Head of caudate nucleus (tissue), 42 donors: ENCODE measurements at regions of chr6 and their contacts with region 1.

Region 1: GRCh38 chr6:134882426-134883038 is 67.4 kb downstream of the ALDH8A1 start:
- DNase-seq: peak; percentile 8 to 90 (median 75)

Region 2: DNA sequence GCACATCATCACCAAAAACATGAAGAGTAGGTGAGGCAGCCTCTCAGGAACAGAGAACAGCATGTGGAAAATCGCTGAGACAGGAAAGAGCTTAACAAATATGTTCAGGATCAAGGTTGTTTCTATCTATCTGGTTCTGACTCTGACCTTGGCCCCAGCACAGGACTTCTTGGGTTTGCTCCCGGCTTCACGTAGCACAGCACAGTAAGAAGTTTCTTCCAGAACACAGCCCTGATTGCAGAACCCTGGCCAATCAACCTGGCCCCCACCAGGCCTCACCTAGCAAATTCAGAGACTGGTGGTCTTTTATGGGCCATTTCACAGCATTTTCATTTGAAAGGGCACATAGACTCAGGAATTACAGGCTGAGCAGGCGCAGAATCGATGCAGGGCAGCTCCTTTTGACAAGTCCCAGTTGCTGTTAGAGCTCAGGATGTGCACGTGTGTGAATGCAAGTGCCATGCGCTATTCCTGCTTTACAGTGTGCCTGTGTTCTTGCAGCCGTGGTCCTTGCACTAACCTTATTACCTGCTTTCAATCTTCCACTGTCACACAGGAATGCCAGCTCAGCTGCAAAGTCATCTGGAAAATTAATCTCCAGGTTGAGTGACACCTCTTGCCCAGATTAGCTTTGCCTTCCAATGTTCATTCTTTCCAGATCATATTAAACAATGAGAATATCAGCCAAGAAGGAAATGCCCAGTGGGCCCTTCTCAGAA is 729.6 kb before region 1 on chr6:
- intact Hi-C with region 1: loop called (anchors 10 kb)
- DNase-seq: no peak

Region 3: DNA sequence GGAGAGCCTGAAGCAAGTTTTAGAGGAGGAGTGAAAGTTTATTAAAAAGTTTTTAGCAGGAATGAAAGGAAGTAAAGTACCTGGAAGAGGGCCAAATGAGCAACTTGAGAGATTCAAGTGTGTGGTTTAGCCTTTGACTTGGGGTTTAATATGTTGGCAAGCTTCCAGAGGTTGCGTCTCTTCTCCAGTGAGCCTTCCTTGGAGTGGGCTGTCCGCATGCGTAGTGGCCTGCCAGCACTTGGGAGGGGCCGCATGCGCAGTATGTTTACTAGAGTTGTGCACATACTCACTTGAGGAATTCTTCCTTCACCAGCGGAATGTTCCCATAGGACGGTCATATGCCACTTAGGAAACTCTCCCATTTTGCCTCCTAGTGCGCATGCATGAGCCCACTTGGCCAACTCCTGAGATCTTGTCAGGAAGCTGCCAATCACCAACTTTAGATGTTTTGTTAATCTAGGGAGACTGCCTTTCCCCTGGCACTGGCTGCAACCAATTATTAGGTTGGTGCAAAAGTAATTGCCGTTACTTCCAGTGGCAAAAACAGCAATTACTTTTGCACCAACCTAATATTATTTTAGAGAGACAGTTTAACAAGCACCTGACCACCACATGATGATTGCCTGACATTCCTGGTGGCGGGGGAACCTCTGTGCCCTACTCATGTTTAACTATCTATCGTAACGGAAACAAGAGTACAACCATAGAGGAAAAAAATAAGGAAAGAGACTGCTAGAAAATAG is 167.7 kb before region 1 on chr6:
- intact Hi-C with region 1: no loop called
- DNase-seq: no peak

Region 4: DNA sequence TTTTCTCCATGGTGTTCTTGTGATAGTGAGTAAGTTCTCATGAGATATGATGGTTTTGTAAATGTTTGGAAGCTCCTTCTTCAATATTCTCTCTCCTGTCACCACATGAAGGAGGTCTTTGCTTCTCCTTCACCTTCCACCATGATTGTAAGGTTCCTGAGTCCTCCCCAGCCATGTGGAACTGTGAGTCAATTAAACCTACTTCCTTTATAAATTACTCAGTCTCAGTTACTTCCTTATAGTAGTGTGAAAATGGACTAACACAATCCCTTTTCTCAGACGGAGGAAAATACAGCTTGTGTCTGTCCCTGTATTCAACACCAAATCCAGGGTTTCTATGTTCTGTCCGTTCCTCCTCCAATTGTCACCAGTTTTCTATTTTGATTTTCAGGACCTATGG is 113.6 kb before region 1 on chr6:
- intact Hi-C with region 1: no loop called
- DNase-seq: no peak